Activated CD4-positive, alpha-beta T cell treated with anti-CD3 and anti-CD28 coated beads for 36 hours (primary cell): ENCODE measurements at regions of chr18 and their contacts with region 1.

Region 1: DNA sequence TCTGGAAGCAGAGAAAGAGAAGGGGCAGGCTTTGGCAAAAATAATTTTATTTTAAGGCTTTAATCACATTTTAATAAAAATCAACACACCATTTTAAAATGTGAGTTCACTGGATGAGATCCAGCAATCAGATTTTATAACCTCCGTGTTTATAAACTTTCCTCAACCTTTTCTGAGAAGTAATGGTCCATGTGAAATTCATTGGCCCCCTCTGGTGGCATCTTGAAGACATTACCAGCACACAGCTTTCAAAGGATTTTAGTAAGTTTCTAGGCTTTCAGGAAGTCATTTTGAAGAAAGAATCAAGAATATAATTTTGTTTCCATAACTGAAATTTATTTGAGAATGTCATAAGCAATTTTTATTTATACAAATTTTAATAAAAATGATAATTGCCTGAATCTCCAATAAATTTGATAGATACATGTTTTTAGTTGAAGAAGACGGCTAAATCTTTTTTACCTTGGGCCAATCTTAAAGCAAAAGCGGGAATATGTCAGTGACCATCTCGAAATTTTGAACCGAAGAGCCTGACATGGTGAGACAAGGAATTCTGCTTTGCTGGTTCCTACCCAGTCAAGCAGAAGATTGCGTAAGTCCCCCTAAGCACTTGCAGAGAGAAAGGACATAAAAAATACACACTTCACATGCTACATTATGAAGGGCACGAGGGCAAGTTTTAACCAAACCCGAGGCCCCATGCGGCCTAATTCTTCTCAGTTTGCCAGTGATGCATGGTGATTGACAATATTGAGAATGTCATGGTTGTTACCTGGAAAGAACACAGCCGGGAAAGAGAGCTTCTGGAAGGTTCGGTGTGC is 128.4 kb upstream of the CBLN2 start:
- DNase-seq: peak; percentile 22
- ATAC-seq: no peak
- H3K4me3 Mint-ChIP-seq: no peak overlapping the region
- H3K27ac Mint-ChIP-seq: no peak overlapping the region
- H3K4me1 Mint-ChIP-seq: no peaks in the 10 kb centered on the region
- H3K27me3 Mint-ChIP-seq: peaks cover 2% of the 10 kb centered on the region

Region 2: GRCh38 chr18:72470391-72470790 is 202.2 kb before region 1 on chr18:
- CTCF ChIA-PET with region 1: no interaction called
- POLR2A ChIA-PET with region 1: no interaction called
- intact Hi-C with region 1: no loop called
- DNase-seq: no peak
- ATAC-seq: no peak
- H3K4me3 Mint-ChIP-seq: no peak overlapping the region
- H3K27ac Mint-ChIP-seq: no peak overlapping the region
- H3K4me1 Mint-ChIP-seq: no peaks in the 10 kb centered on the region
- H3K27me3 Mint-ChIP-seq: no peaks in the 10 kb centered on the region

Region 3: GRCh38 chr18:72652990-72653593 is 19.5 kb before region 1 on chr18:
- CTCF ChIA-PET with region 1: interaction called, 12 read pairs
- POLR2A ChIA-PET with region 1: no interaction called
- intact Hi-C with region 1: loop called (anchors 1 kb)
- DNase-seq: peak; percentile 72
- ATAC-seq: peak; percentile 64
- H3K4me3 Mint-ChIP-seq: no peak overlapping the region
- H3K27ac Mint-ChIP-seq: no peak overlapping the region
- H3K4me1 Mint-ChIP-seq: no peaks in the 10 kb centered on the region
- H3K27me3 Mint-ChIP-seq: peaks cover 2% of the 10 kb centered on the region